ENCODE measurements at regions of chr15 and their contacts with region 1.

Region 1: DNA sequence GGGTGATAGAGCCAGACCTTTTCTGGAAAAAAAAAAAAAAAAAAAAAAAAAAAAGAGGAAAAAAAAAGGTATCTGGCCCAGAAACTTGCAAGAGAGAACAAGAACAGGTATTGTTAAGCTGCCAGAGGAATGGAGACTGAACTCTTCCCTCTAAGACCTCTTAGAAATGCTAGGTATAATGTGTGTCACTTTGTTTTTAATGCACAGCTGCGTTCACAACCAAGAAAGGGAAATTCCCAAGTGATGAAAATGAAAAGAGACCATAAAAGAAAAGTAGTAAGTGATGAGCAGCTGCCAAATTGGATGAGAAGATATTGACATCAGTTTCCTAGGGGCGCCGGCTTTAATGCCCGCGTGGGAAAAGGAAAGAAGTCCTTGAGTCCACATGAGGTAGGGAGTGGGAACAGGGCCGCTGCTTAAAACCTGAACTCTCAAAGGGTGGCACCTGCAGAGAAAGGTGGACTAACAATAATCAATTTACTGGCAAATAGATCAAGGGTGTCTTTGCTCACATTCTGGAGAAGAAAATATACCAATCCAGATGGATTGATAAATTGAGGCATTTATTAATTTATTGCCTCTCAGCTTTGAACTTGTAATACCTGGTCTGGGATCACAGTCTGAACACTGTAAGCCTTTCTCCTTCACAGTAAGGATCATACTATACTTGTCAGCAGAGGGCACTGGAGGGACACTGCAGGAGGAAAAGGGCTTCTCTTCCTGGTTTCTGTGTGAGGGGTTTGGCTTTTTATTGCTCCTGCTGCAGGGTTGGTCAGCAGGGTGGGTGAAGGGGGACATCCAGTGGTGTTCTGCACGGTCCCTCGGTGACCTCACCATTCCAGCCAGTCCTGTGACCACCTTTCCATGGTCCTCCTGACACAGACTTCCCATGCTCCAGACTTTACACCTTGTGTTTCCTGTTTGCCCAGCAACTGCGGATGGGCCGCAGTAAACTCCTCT is 131.6 kb downstream of the AQP9 start:
- DNase-seq: peak; percentile 56
- H3K4me3 Mint-ChIP-seq: no peak overlapping the region
- H3K27ac Mint-ChIP-seq: no peak overlapping the region
- H3K4me1 Mint-ChIP-seq: peaks cover 11% of the 10 kb centered on the region
- H3K27me3 Mint-ChIP-seq: no peaks in the 10 kb centered on the region

Region 2: GRCh38 chr15:58201516-58201915 is 68.2 kb before region 1 on chr15:
- CTCF ChIA-PET with region 1: no interaction called
- intact Hi-C with region 1: no loop called
- DNase-seq: no peak
- H3K4me3 Mint-ChIP-seq: no peak overlapping the region
- H3K27ac Mint-ChIP-seq: no peak overlapping the region
- H3K4me1 Mint-ChIP-seq: no peaks in the 10 kb centered on the region
- H3K27me3 Mint-ChIP-seq: peaks cover 16% of the 10 kb centered on the region

Region 3: DNA sequence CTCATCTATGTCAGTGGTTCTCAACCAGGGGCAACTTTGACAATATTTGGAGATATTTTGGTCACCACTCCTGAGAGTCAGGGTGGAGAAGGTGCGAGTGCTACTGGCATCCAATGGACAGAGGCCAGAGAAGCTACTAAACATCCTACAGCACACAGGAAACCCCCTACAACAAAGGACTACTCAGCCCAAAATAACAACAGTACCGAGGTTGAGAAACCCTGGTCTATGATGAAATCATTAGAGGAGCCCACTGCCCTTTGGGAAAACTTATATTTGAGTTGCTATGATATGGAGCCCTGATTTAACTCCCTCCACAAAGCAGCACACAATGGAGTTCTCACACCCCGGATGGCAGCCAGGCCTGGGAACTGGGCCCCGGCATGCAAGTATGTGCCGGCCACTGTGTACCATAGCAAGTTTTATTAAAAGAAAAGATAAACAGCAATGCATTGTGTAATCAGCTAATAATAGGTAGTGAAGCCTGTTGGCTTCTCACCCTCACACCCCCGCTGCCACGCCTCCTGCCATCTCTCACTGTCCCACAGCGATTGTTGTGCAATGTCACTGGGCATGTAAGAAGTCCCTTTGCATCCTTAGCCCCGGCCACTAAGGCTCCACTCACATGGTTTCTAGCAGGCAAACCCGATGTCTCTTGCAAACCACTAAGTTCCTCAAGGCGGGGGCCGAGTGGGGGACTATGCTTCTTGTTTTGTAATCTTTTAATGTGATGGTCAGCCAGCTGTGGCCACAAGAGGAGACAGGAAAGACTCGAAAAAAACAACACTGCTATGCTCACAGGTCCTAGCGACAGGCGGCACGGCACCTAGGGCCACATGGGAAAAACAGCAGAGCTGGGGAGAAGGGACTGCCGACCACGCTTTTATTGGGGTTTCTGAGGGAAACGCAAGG is 21.6 kb before region 1 on chr15:
- CTCF ChIA-PET with region 1: no interaction called
- intact Hi-C with region 1: no loop called
- DNase-seq: no peak
- H3K4me3 Mint-ChIP-seq: no peak overlapping the region
- H3K27ac Mint-ChIP-seq: no peak overlapping the region
- H3K4me1 Mint-ChIP-seq: peaks cover 15% of the 10 kb centered on the region
- H3K27me3 Mint-ChIP-seq: no peaks in the 10 kb centered on the region

Region 4: DNA sequence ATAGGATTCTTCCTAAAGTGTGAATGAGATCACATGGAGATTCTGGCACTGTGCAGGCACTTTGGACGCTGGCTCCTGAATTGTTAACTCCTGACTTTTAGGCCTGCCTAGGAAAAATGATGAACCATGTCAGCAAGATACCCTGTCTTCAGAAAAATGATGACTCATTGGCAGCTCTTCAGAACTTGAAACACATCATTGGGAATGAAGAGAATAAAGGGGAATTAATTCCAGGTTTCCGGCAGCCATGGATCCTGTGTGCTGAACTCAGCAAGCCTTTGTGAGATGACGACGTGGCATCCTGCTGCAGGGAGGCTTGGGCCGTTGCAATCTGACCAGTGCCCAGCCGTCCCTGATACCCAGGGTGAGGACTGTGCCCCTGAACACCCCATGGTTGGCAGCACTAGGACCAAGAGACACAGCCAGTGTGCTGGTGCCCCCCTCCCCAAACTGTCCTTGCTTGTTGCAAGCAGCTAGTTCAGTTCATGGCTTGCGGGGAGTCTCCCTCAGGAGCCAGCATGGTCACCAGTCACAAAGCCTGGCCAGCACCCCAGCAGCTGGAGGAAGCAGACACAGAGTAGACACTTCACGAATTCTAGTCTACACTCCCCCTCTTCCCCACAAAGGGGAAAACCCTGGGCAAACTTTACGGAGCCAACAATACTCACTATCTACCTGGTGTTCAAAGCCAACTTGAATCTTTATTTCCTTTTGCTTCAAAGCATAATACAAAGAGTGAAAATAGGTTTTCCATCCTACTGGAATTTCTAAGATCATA is 154.3 kb after region 1 on chr15:
- CTCF ChIA-PET with region 1: no interaction called
- intact Hi-C with region 1: loop called (anchors 10 kb)
- DNase-seq: peak; percentile 44
- H3K4me3 Mint-ChIP-seq: no peak overlapping the region
- H3K27ac Mint-ChIP-seq: no peak overlapping the region
- H3K4me1 Mint-ChIP-seq: peaks cover 20% of the 10 kb centered on the region
- H3K27me3 Mint-ChIP-seq: no peaks in the 10 kb centered on the region

Region 5: DNA sequence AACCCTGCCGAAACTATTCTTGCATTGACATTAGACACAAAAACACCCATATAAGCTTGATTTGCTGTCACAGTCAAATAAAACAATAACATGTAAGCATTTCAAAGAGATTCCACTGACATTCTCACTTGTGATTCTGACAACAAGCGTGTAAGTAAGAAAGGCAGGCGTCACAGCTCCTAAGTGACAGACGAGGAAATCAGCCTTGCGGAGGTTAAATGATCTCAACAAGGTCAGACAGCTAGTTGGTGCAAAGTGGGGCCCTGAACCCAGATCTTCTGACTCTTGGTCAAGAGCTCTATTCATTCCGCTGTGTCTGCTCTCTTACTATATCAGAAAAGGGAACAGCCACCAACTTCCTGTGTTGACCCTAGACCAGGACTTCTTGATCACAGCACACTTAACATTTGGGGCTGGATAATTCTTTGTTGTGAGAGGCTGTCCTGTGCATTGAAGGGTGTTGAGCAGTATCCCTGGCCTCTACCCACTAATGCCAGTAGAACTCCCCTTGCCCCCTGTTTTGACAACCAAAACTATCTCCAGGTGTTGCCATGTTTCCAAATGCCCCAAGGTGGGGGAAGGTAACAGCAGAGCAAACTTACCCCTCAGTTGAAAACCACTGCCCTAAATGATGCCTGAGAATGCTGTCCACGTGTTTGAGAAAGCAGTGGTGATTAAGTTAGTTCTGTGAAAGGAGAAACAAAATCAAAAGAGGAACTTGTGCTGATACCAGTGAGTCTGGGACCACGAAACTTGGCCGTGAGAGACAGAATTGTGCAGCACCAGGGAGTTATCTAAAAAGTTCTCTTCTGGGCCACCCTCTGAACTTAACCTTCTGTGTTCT is 248.2 kb after region 1 on chr15:
- CTCF ChIA-PET with region 1: interaction called, 3 read pairs
- intact Hi-C with region 1: loop called (anchors 10 kb)
- DNase-seq: peak; percentile 38
- H3K4me3 Mint-ChIP-seq: no peak overlapping the region
- H3K27ac Mint-ChIP-seq: peak overlapping the region; percentile 43
- H3K4me1 Mint-ChIP-seq: peaks cover 62% of the 10 kb centered on the region
- H3K27me3 Mint-ChIP-seq: no peaks in the 10 kb centered on the region

Region 6: DNA sequence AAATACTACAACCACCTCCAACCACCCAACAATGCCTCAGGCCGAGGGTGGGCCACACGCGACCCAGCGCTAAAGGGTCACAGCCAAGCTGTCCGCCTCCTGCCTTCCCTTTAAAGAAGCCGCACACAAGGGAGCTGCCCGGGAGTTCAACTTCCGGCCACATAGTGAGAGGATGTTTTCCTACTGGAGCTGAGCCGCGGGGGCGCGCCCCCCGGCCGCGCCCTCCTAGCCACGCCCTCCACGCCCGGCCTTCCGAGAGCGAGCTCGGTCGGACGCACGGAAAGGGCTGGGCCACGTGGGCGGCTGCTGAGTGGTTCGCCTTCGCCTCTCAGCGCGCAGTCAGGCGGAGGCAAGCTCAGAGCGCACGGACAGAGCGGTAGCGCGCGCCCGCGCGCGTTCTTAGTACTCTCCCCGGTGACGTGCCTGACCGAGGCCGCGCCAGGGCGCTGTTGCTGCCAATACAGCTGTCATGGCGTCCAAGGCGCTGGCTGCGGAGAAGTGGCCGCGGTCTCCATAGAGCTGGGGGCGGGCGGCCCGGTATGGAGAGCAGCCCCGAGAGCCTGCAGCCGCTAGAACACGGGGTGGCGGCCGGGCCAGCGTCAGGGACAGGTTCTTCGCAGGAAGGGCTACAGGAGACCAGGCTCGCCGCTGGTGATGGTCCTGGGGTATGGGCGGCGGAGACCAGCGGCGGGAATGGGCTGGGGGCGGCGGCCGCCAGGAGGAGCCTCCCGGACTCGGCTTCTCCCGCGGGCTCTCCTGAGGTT is 501.3 kb after region 1 on chr15 and contains the start of gene MINDY2:
- CTCF ChIA-PET with region 1: no interaction called
- intact Hi-C with region 1: loop called (anchors 5 kb)
- DNase-seq: peak; percentile 95
- H3K4me3 Mint-ChIP-seq: peak within 1 kb of the TSS; percentile 92
- H3K27ac Mint-ChIP-seq: peak within 1 kb of the TSS; percentile 65
- H3K4me1 Mint-ChIP-seq: no peaks in the 10 kb centered on the region
- H3K27me3 Mint-ChIP-seq: no peaks in the 10 kb centered on the region
- total RNA-seq, gene MINDY2: 4.6 to 6.6 TPM

Region 7: DNA sequence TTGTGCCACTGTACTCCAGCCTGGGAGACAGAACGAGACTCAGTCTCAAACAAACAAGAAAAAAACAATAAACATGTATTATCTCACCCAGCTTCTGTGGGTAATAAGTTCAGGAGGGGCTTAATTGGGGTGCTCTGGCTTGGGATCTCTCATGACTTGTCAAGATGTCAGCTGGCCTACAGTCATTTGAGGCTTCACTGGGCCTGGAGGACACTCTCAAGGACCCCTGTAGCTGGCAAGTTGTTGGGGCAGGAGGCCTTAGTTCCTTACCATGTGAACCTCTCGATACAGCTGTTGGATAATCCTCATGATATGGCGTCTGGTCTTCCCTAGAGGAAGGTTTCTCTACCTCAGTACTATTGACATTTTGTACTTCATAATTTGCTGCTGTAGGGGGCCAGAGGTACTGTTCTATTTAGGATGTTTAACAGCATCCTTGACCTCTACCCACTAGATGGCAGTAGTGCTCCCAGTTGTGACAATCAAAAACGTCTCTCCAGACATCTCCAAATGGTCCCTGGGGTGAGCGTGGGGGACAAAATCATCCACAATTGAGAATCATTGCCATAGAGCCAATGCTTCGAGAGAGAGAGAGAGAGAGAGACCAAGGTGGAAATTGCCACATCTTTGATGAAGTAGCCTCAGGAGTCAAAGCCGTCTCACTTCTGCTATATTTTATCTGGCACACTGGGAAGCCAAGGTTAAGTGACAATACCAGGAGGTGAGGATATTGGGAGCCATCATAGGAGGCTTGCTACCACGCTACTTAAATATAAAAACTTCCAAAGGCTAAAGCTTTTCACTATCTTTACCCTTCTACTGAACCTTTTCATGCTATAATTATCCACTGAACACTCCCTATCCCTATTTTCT is 687.6 kb after region 1 on chr15:
- CTCF ChIA-PET with region 1: no interaction called
- intact Hi-C with region 1: loop called (anchors 1 kb)
- DNase-seq: peak; percentile 75
- H3K4me3 Mint-ChIP-seq: no peak overlapping the region
- H3K27ac Mint-ChIP-seq: no peak overlapping the region
- H3K4me1 Mint-ChIP-seq: peaks cover 10% of the 10 kb centered on the region
- H3K27me3 Mint-ChIP-seq: no peaks in the 10 kb centered on the region

Measured in activated naive CD4-positive, alpha-beta T cell treated with anti-CD3 and anti-CD28 coated beads for 36 hours (primary cell).